Activated T-helper 1 cell treated with anti-CD3 and anti-CD28 coated beads, Interleukin-12 subunit alpha, Interleukin-12 subunit beta, Interleukin-2, Interleukin-4 antibody, amounts not matched to agents 30 ng/mL and 10 ng/mL and 1 ng/mL, durations not matched to agents 14 hours and 24 hours and 36 hours (primary cell): ENCODE measurements at regions of chr11 and their contacts with region 1.

Region 1: GRCh38 chr11:85040166-85040565 is 587.0 kb downstream of the DLG2 start:
- DNase-seq: no peak
- H3K4me3 Mint-ChIP-seq: no peak overlapping the region
- H3K27ac Mint-ChIP-seq: no peak overlapping the region
- H3K4me1 Mint-ChIP-seq: no peaks in the 10 kb centered on the region
- H3K27me3 Mint-ChIP-seq: no peaks in the 10 kb centered on the region

Region 2: DNA sequence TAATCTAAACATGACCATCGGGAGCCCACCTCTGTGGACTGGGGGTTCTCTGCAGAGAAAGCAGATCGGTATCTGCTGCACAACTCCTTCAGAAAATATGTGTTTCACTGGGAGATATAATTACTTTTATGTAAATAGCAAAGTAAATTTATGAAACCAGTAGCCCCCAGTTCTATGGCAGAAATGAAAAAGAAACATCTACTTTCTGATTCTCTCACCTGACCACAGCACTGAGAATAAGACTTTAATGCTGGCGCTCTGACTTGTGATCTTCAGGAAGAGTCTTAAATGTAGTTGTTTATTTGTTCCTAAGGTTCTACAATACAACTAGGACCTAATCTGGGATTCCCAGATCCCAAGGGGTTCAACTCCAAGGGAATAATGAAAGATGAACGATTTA is 69.0 kb after region 1 on chr11:
- intact Hi-C with region 1: loop called (anchors 10 kb)
- DNase-seq: no peak
- H3K4me3 Mint-ChIP-seq: no peak overlapping the region
- H3K27ac Mint-ChIP-seq: no peak overlapping the region
- H3K4me1 Mint-ChIP-seq: peaks cover 5% of the 10 kb centered on the region
- H3K27me3 Mint-ChIP-seq: no peaks in the 10 kb centered on the region